Psoas muscle (tissue), 8 donors: ENCODE measurements at regions of chr7 and their contacts with region 1.

Region 1: DNA sequence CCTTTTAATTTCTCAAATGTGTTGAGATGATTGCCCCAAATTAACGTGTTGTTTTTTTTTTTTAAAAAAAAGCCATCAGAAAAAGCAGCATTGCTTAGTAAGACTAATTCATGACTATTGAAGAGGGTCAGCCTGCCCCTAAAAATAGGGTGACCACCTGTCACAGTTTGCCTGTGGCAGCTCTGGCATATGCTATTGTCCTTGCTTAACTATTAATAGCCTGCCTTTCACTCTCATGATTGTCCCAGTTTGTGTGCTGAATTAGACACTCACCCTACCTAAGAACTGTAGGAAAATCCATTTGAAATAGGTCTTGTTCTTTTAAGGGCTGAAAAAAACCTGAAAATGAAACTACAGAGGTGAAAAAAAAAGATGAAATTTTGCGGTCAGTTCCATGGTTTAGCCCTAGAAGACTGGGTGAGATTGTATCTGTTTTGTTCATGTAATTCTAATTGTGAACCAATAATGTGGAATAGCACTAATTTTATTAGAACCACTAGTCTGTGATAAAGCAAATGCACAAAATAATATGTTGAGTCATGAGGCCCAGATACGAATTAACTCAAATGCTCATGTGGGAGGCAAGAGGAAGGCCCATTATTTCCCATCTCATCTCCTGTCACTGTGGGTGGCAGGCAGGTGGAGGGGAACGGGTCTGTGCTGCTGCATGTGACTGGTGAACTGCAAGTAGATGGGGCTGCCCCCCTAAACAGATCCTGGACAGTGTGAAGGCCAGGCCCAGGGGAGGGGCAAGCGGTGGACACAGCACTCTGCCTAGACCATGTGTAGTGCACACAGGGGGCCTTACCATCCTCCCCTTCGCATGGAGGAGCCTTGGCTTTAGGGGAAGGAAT is 265.4 kb upstream of the NFE2L3 start:
- DNase-seq: no peak
- ATAC-seq: peak; percentile 77 to 93 (median 91)
- H3K4me3 ChIP-seq: peak overlapping the region; percentile 27
- H3K27ac ChIP-seq: peak overlapping the region; percentile 64
- H3K4me1 ChIP-seq: peaks cover 27% of the 10 kb centered on the region
- H3K27me3 ChIP-seq: no peaks in the 10 kb centered on the region
- CTCF ChIP-seq: no peak

Region 2: DNA sequence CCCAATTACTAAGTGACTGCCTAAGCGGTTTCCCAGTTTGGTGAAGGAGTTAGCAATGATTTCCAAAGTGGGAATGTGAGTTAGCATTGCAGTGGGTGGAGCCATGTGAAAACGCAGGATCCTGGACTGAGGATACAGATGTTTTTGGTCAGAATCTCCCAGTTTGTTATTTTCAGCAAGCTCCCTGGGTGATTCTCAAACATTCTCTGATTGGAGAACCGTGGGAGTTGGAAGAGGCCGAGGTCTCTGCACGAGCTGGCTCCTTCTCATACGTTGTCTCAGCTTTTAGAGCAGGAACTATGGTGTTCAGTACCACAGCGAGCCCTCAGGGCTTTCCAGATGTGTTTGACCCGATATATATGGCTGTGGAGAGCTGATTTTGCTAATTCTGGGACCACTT is 261.8 kb before region 1 on chr7:
- intact Hi-C with region 1: no loop called
- DNase-seq: no peak
- ATAC-seq: peak in 2 of 4 donors; percentile 30 to 32
- H3K4me3 ChIP-seq: no peak overlapping the region
- H3K27ac ChIP-seq: peak overlapping the region; percentile 38
- H3K4me1 ChIP-seq: no peaks in the 10 kb centered on the region
- H3K27me3 ChIP-seq: no peaks in the 10 kb centered on the region
- CTCF ChIP-seq: no peak

Region 3: DNA sequence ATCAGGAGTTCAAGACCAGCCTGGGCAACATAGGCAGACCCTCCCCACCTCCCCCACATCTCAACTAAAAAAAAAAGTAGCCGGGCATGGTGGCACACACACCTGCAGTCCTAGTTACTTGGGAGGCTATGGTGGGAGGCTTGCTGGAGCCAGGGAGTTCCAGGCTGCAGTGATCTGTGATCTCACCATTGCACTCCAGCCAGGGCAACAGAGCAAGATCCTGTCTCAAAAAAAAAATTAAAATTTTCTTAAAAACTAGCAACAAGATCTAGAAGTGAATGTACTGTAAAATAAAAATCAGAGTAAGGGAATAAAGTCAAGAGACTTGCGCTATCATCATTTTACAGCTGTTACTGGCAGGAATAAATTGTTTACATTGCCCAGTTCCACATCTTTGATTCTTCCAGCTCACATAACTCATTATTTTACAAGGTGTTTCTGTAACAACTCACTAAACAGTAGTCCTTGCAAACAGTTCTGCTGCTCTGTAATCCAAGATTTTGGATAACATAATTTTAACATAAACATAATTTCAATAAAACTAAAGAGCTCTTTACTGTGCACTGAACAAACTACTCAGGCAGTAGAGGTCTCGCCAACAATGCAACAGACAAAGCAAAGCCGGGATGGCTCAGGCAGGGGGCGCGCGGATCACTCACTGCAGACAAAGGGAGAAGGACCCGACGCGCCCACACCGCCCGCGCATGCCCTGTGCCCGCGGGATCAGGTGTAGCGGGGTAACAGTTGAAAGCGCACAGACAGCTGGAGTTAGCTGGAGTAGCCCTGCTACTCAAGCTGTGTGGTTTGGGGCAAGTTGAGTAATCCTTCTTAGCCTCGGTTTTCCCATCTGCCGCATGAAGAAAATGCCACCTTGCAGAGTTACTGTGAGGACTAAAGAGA is 192.1 kb after region 1 on chr7:
- intact Hi-C with region 1: no loop called
- DNase-seq: peak; percentile 56 to 66
- ATAC-seq: peak; percentile 40 to 67 (median 62)
- H3K4me3 ChIP-seq: no peak overlapping the region
- H3K27ac ChIP-seq: no peak overlapping the region
- H3K4me1 ChIP-seq: no peaks in the 10 kb centered on the region
- H3K27me3 ChIP-seq: peaks cover 5 to 32% (median 6%) of the 10 kb centered on the region in 3 donors
- CTCF ChIP-seq: peak; percentile 12

Region 4: DNA sequence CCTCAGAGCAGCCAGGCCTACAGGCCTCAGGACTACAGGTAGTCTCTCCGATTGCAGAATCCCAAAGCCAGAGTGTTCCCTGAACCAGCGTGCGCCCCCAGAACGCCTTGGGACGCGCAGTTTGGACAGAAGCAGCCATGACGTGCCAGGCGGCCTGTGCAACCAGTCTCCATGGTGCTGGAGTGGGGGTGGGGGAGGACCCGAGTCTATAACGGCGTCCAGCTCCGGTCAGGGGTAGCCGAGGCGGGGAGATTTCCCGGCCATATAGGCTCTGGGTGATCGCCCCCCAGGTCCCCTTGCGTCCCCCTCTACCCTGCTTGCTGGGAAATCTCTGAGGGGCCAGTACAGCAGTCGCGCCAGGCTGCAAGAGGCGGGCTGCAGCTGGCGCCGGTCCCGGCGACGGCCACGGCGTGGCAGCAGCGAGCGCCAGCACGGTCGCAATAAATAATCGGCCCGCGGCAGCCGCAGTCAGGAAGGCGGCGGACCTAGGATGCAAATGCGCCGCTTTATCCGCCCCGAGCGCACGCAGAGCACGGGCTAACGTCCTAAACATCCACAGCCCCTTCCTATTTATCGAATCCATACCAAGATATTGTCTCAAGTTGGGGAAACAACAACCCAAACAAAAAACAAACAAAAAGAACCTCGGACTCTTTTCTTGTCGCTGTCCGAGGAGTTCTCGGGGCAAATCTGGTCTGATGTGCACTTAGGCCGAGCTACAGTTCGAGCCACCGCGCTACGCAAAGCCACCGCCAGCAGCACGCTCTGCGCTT is 1264.1 kb after region 1 on chr7:
- intact Hi-C with region 1: loop called in 1 of 2 experiments (anchors 10 kb)
- DNase-seq: peak; percentile 84 to 93
- ATAC-seq: peak; percentile 73 to 81 (median 75)
- H3K4me3 ChIP-seq: peak overlapping the region; percentile 75
- H3K27ac ChIP-seq: peak overlapping the region; percentile 84
- H3K4me1 ChIP-seq: peaks cover 35% of the 10 kb centered on the region
- H3K27me3 ChIP-seq: no peaks in the 10 kb centered on the region
- CTCF ChIP-seq: peak; percentile 84